GM18951 (cell line): ENCODE measurements at regions of chr3 and their contacts with region 1.

Region 1: GRCh38 chr3:156449712-156450574 is 105.0 kb downstream of the SSR3 start:
- POLR2A ChIP-seq: no peak

Region 2: GRCh38 chr3:156509189-156510174 is 59.5 kb after region 1 on chr3:
- in situ Hi-C with region 1: loop called (anchors 10 kb)
- POLR2A ChIP-seq: no peak

Region 3: GRCh38 chr3:156620260-156620659 is 170.3 kb after region 1 on chr3:
- in situ Hi-C with region 1: no loop called
- POLR2A ChIP-seq: no peak

Region 4: DNA sequence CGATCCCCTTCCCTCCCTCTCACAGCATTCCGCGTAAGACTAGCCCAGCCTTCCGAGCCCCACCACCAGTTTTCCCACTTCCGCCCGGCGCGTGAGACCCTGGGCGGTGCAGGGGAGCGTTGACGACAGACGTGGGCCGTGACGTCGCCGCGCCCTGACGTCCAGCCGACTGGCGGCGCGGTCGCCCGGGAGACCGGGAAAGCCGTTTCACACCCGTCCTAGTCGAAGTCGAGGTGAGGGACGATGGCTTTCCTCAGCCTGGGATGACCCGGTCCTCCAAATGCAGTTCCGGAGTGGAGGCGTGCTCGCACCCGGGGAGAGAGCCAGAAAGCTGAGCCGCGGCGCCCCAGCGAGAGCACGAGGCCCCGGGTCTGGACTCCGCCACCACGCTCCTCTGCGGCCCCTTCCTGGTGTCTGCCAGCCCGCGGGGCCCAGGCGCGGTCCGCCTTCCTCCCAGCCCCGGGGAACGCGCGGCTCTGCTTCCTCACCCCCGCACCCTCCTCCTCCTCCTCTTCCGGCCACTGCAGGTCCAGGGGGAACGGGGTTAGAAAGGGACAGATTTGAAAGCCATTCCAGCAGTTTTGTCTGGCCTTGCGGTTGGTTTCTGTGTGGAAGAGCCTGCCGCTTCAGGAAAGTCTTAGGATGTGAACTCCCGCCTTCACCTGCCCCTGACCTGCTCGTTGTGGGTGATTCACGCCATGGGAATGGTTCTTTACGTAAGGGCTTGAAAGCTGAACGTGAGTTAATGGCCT is 376.4 kb after region 1 on chr3 and contains the start of gene LEKR1:
- in situ Hi-C with region 1: no loop called
- POLR2A ChIP-seq: peak; percentile 79